ENCODE measurements at regions of chr3 and their contacts with region 1.

Region 1: DNA sequence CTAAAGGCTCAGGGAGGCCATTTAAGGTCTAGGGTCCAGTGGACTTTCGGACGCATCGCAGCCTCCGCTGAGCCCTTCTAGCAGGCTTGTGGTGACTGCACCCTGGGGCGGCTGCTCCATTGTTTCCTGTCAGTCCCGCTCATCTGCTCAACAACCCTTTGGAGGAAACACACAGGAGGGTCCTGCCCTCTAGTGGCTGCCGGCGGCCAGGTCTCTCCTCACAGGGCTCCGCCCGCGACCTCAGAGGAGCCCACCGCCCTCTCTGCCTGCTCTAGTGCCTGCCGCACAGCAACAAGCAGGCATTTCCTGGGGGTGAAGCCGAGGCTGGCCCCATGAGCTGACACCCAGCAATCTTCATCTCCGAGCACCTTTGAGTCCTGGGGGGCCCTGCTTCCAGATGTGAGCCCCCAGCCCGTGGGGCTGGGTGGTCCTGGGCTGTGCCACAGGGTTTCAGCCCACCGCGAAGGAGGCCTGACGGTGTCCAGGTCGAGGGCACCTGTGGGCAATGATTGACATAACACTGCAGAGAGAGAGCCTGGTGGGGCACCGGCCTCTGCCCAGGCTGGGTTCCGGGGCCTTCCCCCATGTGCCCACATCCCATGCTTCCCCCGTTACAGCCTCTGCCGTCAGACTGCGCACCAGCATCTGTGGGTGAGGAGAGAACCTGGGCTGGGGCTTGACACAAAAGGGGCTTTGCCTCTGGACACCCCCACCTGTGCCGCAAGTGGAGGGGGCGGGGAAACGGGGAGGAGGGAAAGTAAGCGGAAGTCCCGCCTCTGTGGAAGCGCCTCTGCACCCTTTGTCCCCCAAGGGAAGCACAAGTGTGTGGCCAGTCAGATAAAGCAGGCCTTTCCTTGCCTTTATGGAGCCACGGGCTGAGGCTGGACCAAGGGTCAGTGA is 27.0 kb upstream of the SFMBT1 start:
- DNase-seq: peak; percentile 95
- H3K4me3 ChIP-seq: peak overlapping the region; percentile 66 to 84 (median 74)
- H3K27ac ChIP-seq: peak overlapping the region; percentile 31 to 76 (median 72)
- H3K4me1 ChIP-seq: peaks cover 17 to 25% (median 19%) of the 10 kb centered on the region in 4 donors
- H3K27me3 ChIP-seq: no peaks in the 10 kb centered on the region
- CTCF ChIP-seq: peak; percentile 91 to 98 (median 94)
- EP300 ChIP-seq: no peak
- POLR2A ChIP-seq: no peak

Region 2: DNA sequence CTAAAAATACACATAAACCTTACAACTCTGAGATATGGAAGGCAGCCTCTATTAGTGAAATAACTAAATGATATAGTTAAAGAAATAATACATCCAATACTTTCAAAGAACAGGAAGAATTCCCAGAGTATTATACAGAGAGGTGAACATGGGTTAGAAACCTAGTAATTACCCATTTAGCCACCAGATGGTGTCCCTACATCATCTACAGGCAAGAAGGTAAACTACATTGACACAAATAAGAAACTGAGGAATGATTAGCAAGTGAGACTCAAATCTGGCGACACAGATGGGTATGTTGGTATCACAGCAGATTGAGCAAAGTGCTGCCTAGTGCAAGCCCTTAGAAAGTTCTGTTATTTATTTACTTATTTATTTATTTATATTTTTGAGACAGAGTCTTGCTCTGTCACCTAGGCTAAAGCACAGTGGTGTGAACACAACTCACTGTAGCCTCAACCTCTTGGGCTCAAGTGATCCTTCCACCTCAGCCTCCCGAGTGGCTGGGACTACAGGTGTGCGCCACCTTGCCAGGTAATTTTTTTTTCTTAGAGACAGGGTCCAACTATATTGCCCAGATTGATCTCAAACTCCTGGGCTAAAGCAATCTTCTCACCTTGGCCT is 330.4 kb before region 1 on chr3:
- intact Hi-C with region 1: loop called (anchors 2 kb)
- DNase-seq: no peak
- H3K4me3 ChIP-seq: no peak overlapping the region
- H3K27ac ChIP-seq: no peak overlapping the region
- H3K4me1 ChIP-seq: no peaks in the 10 kb centered on the region
- H3K27me3 ChIP-seq: no peaks in the 10 kb centered on the region
- CTCF ChIP-seq: peak; percentile 35 to 49 (median 42)
- EP300 ChIP-seq: no peak
- POLR2A ChIP-seq: no peak

Region 3: DNA sequence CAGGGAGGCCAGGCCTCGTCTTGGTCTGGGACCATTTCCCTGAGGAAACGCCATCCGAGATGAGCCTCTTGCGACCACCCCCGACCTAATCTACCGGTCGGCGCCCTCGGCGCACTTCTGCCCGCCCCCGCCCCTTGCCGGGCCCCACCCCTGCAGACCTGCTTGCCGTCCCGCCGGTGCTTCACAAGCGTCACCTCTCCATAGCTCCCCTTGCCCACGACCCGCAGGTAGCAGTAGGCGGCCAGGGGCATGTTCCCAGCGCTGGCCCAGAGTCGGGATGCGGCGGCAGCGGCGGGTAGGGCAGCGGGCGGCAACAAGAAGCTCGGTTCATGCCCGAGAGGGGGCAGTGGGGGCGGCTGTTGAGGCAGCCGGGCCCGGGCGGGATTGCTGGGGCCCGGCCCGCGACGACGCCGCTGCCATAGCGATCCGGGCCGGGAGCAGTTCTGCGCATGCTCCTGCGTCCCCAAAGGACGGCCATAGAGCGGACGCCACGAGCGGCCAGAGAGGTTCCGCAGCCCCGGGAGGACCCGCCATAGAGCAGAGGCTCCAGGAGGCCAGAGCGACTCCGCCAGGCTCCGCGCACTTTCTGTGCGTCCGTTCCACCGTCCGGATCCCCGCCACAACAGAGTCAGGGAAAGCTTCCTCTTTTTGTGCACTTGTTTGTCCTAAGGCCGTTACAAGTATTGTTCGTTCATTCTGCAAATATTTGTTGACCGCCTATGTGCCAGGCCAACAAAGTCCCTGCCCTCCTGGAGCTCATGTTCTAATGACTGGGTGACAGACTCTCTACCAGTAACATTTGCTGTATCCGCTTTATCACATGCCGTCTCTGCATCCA is 302.2 kb before region 1 on chr3 and contains the start of gene NEK4:
- intact Hi-C with region 1: loop called (anchors 10 kb)
- DNase-seq: peak; percentile 95
- H3K4me3 ChIP-seq: peak within 1 kb of the TSS; percentile 74 to 95 (median 94)
- H3K27ac ChIP-seq: peak within 1 kb of the TSS; percentile 72 to 83 (median 74)
- H3K4me1 ChIP-seq: peaks cover 13 to 21% (median 19%) of the 10 kb centered on the region in 4 donors
- H3K27me3 ChIP-seq: no peaks in the 10 kb centered on the region
- CTCF ChIP-seq: peak in 1 of 3 experiments; percentile 4
- EP300 ChIP-seq: no peak
- POLR2A ChIP-seq: no peak
- total RNA-seq, gene NEK4: 19.1 to 29.2 (median 23.6) TPM

Region 4: GRCh38 chr3:52845691-52846431 is 227.0 kb before region 1 on chr3:
- intact Hi-C with region 1: loop called (anchors 5 kb)
- DNase-seq: no peak
- H3K4me3 ChIP-seq: no peak overlapping the region
- H3K27ac ChIP-seq: peak overlapping the region; percentile 78 to 83 (median 80)
- H3K4me1 ChIP-seq: peaks cover 50 to 83% (median 74%) of the 10 kb centered on the region in 4 donors
- H3K27me3 ChIP-seq: no peaks in the 10 kb centered on the region
- CTCF ChIP-seq: peak; percentile 25 to 64 (median 36)
- EP300 ChIP-seq: no peak
- POLR2A ChIP-seq: no peak

Region 5: GRCh38 chr3:52934630-52935530 is 138.0 kb before region 1 on chr3:
- intact Hi-C with region 1: loop called (anchors 2 kb)
- DNase-seq: no peak
- H3K4me3 ChIP-seq: no peak overlapping the region
- H3K27ac ChIP-seq: no peak overlapping the region
- H3K4me1 ChIP-seq: peaks cover 0 to 4% (median 0%) of the 10 kb centered on the region in 4 donors
- H3K27me3 ChIP-seq: no peaks in the 10 kb centered on the region
- CTCF ChIP-seq: peak; percentile 59 to 82 (median 78)
- EP300 ChIP-seq: no peak
- POLR2A ChIP-seq: no peak

Region 6: DNA sequence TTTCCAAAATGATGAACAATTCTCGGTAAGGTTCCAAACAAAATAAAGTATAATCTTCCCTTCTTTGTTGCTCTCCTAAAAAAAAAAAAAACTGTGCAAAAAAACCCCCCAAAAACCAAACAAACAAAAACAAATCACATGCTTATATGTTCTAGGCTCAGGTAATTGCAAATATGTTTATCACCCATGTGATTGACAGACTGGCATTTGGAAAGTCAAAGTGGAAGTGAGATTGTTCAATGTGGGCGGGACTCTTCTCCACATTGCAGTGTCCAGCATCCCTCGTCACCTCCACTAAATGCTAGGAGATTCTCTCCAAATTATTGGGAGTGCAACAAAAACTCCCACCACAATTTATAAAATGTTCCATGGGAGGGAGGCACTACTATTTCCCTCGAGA is 363.9 kb after region 1 on chr3:
- intact Hi-C with region 1: no loop called
- DNase-seq: no peak
- H3K4me3 ChIP-seq: no peak overlapping the region
- H3K27ac ChIP-seq: no peak overlapping the region
- H3K4me1 ChIP-seq: no peaks in the 10 kb centered on the region
- H3K27me3 ChIP-seq: peaks cover 0 to 4% (median 0%) of the 10 kb centered on the region in 4 donors
- CTCF ChIP-seq: no peak
- EP300 ChIP-seq: no peak
- POLR2A ChIP-seq: no peak

Measured in esophagus muscularis mucosa (tissue), 4 donors.